ENCODE measurements at regions of chr4 and their contacts with region 1.

Region 1: DNA sequence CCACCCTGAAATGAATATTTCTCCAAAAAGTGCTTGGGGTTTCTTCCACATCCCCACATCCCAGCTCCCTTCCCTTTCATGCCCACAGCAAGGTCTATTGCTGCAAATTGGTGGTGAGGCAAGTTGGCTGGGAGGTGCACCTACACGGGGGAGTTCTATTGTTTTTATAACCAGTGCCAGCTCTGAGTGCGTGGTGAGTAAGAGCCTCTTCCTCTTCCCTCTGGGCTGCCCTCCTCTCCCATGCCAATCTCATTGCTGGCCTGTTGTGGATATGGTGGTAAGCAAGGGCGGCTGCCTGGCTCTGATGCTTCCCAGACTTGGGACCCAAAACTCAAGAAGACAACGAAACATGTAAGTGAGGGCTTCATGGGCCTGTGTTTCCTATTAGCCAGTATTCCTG is 204.3 kb downstream of the SHROOM3 start:
- DNase-seq: peak; percentile 86
- H3K4me3 ChIP-seq: no peak overlapping the region
- H3K27ac ChIP-seq: peak overlapping the region; percentile 14
- H3K4me1 ChIP-seq: peaks cover 51% of the 10 kb centered on the region
- H3K27me3 ChIP-seq: no peaks in the 10 kb centered on the region
- CTCF ChIP-seq: no peak

Region 2: DNA sequence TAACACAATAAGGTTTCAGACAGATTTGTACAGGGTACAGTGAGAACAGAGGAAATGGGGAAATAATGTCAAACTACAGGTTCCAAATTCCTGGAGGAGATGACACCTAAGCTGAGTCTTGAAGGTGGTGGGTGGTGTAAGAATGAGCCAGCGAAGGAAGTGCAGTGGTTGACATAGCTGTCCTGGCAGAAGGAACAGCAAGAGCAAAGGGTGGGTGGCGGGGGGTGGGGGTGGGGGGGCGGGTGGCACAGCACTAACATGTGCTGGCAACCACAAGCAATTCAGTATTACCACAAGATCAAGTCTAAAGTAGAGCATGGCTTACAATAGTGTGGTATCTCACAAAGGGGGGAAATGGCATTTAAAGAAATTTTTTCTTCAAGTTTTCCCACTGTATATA is 952.9 kb before region 1 on chr4:
- CTCF ChIA-PET with region 1: no interaction called
- dilution Hi-C with region 1: no loop called
- in situ Hi-C with region 1: no loop called
- intact Hi-C with region 1: no loop called
- DNase-seq: no peak
- H3K4me3 ChIP-seq: no peak overlapping the region
- H3K27ac ChIP-seq: no peak overlapping the region
- H3K4me1 ChIP-seq: no peaks in the 10 kb centered on the region
- H3K27me3 ChIP-seq: no peaks in the 10 kb centered on the region
- CTCF ChIP-seq: no peak

Region 3: DNA sequence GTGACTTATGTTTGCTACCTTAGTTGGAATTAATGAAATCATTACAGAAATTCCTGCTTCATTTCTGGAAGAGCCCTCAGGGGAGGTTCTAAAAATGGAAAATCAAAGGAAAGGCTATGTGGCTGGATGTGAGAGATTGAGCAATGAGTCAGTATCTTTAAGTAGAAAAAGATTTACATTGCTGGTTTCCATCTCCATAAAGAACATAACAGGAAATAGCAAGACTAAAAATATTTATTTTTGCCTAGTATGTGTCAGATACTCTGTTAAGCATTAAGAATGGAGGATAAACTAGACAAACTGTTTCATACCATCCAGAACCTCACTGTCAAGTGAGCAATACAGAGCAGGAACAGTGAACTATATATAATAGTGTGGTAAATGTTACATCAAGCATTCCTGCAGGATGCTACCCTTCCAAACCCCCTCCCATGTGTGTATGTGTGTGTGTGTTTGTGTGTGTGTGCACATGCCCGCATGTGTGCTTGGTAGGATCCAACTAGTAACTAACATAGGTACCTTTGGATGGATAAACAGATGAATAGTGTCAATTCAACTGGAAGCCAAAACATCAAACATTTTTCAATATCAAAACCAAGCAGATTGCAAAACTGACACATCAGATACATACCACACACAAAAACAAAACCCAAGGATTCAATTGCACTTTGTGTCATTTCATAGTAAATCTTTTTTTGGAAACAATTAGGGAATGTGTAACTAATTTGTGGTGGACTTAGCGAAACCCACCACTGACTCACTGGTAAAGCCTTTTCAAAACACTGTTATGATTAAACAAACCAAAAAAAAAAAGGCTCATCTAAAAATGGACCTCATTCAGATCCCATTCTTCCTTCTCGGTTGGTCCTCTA is 19.2 kb after region 1 on chr4:
- CTCF ChIA-PET with region 1: no interaction called
- dilution Hi-C with region 1: no loop called
- in situ Hi-C with region 1: no loop called
- intact Hi-C with region 1: loop called (anchors 2 kb)
- DNase-seq: peak; percentile 62
- H3K4me3 ChIP-seq: no peak overlapping the region
- H3K27ac ChIP-seq: peak overlapping the region; percentile 32
- H3K4me1 ChIP-seq: peaks cover 25% of the 10 kb centered on the region
- H3K27me3 ChIP-seq: no peaks in the 10 kb centered on the region
- CTCF ChIP-seq: no peak

Region 4: DNA sequence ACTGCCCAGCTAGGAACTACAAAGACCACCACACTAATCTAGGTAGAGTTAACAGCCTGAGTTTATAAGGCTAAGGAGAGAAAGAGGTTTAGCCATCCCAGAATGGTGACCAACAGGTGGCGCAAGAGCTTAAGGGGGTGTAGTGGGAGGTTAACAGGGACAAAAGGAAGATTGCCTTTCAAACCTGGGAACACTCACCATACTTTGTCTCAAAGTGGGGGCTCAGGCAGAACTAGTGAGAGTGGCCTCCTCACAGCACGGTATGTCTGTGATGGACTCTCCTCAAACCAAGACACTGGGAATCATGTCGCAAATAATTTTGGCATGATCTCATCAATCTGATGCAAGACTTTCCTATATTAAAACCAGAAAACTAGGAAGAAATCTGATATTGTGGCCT is 413.1 kb after region 1 on chr4:
- CTCF ChIA-PET with region 1: no interaction called
- dilution Hi-C with region 1: no loop called
- in situ Hi-C with region 1: no loop called
- intact Hi-C with region 1: no loop called
- DNase-seq: peak; percentile 46
- H3K4me3 ChIP-seq: no peak overlapping the region
- H3K27ac ChIP-seq: peak overlapping the region; percentile 51
- H3K4me1 ChIP-seq: peaks cover 31% of the 10 kb centered on the region
- H3K27me3 ChIP-seq: no peaks in the 10 kb centered on the region
- CTCF ChIP-seq: peak; percentile 71 to 80

Measured in mammary epithelial cell (primary cell).